ENCODE measurements at regions of chr11 and their contacts with region 1.

Region 1: DNA sequence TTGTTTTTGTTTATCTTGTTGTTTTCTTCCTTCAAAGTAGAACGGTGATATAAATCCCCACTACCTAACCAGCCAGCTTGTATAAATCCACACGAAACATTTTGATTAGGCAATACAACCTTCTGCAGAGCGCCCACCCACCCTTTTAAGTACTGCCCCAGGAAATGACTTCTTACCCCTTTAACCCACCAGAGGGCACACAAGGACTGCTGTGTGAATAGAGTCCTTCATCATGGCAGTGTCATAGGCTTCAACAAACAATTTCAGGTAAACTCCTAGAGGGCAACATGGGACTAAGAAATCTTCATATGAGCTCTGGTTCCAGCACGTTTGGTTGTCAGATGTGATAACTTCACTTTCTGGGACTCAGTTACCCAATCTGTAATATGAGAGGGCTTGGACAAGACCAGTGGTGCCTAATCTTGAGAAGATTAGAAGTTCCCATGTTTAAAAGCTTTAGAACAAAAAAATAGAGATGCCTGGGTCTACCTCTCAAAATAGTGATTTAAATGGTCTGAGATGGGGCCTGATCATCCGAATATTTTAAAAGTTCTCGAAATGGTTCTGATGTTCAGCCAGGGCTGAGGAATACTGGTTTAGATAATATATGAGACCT is 56.1 kb downstream of the PIWIL4 start:
- DNase-seq: peak in 8 of 9 donors; percentile 33 to 68 (median 55)
- ATAC-seq: peak; percentile 91
- H3K4me3 ChIP-seq: no peak overlapping the region
- H3K4me3 Mint-ChIP-seq: no peak overlapping the region
- H3K27ac ChIP-seq: no peak overlapping the region
- H3K27ac Mint-ChIP-seq: peak overlapping the region in 1 of 9 donors; percentile 2
- H3K4me1 ChIP-seq: no peaks in the 10 kb centered on the region
- H3K4me1 Mint-ChIP-seq: peaks cover 0 to 2% (median 0%) of the 10 kb centered on the region in 7 donors
- H3K27me3 ChIP-seq: no peaks in the 10 kb centered on the region
- H3K27me3 Mint-ChIP-seq: peaks cover 5 to 18% (median 13%) of the 10 kb centered on the region in 5 donors

Region 2: GRCh38 chr11:94636388-94636949 is 13.2 kb after region 1 on chr11:
- CTCF ChIA-PET with region 1: interaction called, 3 read pairs
- POLR2A ChIA-PET with region 1: no interaction called
- intact Hi-C with region 1: loop called in 1 of 2 experiments (anchors 2 kb)
- DNase-seq: no peak
- ATAC-seq: no peak
- H3K4me3 ChIP-seq: no peak overlapping the region
- H3K4me3 Mint-ChIP-seq: no peak overlapping the region
- H3K27ac ChIP-seq: no peak overlapping the region
- H3K27ac Mint-ChIP-seq: no peak overlapping the region
- H3K4me1 ChIP-seq: no peaks in the 10 kb centered on the region
- H3K4me1 Mint-ChIP-seq: peaks cover 0 to 20% (median 14%) of the 10 kb centered on the region in 7 donors
- H3K27me3 ChIP-seq: no peaks in the 10 kb centered on the region
- H3K27me3 Mint-ChIP-seq: no peaks in the 10 kb centered on the region

Region 3: DNA sequence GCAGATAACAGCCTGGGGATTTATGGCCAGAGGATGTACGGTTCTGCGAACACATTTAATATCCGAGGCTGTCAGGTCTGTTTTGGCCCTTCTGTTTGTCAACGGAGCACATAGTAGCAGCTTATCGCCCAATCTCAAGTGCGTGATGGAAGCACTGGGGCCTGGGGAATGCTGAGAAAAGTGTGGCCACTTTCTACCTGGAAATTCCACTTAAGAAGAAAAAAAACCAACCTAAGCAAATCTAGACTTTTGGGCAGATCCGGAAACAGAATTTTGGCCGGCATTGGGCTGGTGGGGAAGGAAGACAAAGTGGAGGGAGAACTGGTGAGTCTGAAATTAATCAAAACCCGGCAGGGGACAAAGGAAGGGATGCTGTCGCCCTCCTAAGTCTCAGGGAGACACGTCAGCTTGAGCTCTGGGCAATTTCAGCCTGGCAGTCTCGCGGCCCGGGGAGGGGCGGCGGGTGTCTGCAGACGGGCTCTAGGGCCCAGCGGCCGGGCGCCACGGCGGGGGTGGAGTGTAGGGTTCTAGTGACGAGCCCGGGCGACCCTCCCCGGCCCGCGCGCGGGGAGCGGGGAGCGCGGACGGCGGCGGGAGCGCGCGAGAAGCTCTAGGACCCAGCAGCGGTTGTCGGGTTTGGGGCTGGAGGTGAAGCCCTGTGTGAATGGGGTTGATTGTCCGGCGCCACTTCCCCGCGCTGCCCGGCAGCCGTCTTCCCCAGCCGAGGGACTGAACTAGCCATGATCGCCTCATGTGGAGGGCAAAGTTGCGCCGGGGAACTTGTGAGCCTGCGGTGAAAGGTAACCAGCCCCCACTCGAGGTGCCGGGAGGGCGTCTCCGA is 144.8 kb after region 1 on chr11 and contains the start of gene AMOTL1:
- CTCF ChIA-PET with region 1: no interaction called
- POLR2A ChIA-PET with region 1: no interaction called
- intact Hi-C with region 1: loop called (anchors 5 kb)
- DNase-seq: peak in 2 of 9 donors; percentile 15 to 56
- ATAC-seq: peak; percentile 71
- H3K4me3 ChIP-seq: no peak within 1 kb of the TSS
- H3K4me3 Mint-ChIP-seq: peak within 1 kb of the TSS; percentile 45 to 87 (median 80)
- H3K27ac ChIP-seq: no peak within 1 kb of the TSS
- H3K27ac Mint-ChIP-seq: peak within 1 kb of the TSS in 2 of 9 donors; percentile 58 to 66
- H3K4me1 ChIP-seq: no peaks in the 10 kb centered on the region
- H3K4me1 Mint-ChIP-seq: peaks cover 5 to 19% (median 13%) of the 10 kb centered on the region in 7 donors
- H3K27me3 ChIP-seq: no peaks in the 10 kb centered on the region
- H3K27me3 Mint-ChIP-seq: peaks cover 36 to 48% (median 41%) of the 10 kb centered on the region in 5 donors
- total RNA-seq, gene AMOTL1: 0.05 to 6.3 (median 0.39) TPM in 4 of 5 experiments, not detected in the other

Region 4: GRCh38 chr11:94897330-94897768 is 274.1 kb after region 1 on chr11:
- CTCF ChIA-PET with region 1: interaction called, 4 read pairs
- POLR2A ChIA-PET with region 1: no interaction called
- intact Hi-C with region 1: loop called in 1 of 2 experiments (anchors 1 kb)
- DNase-seq: peak in 5 of 9 donors; percentile 14 to 34 (median 26)
- ATAC-seq: peak; percentile 63
- H3K4me3 ChIP-seq: no peak overlapping the region
- H3K4me3 Mint-ChIP-seq: no peak overlapping the region
- H3K27ac ChIP-seq: no peak overlapping the region
- H3K27ac Mint-ChIP-seq: no peak overlapping the region
- H3K4me1 ChIP-seq: no peaks in the 10 kb centered on the region
- H3K4me1 Mint-ChIP-seq: peaks cover 0 to 5% (median 0%) of the 10 kb centered on the region in 7 donors
- H3K27me3 ChIP-seq: no peaks in the 10 kb centered on the region
- H3K27me3 Mint-ChIP-seq: peaks cover 0 to 7% (median 0%) of the 10 kb centered on the region in 5 donors

Region 5: DNA sequence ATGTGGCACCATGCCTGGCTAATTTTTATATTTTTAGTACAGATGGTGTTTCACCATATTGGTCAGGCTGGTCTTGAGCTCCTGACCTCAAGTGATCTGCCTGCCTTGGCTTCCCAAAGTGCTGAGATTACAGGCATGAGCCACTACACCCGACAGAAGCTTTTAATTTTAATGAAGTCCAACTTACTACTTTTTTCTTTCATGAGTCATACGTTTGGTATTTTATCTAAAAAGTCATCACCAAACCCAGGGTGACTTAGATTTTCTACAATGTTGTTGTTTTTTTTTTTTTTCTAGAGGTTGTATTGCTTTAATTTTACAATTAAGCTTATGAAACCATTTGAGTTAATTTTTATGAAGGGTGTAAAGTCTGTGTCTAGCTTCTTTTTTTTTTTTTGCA is 1801.5 kb after region 1 on chr11:
- CTCF ChIA-PET with region 1: interaction called, 3 read pairs
- POLR2A ChIA-PET with region 1: no interaction called
- intact Hi-C with region 1: loop called (anchors 1 to 2 kb)
- DNase-seq: no peak
- ATAC-seq: no peak
- H3K4me3 ChIP-seq: no peak overlapping the region
- H3K4me3 Mint-ChIP-seq: no peak overlapping the region
- H3K27ac ChIP-seq: no peak overlapping the region
- H3K27ac Mint-ChIP-seq: no peak overlapping the region
- H3K4me1 ChIP-seq: no peaks in the 10 kb centered on the region
- H3K4me1 Mint-ChIP-seq: peaks cover 0 to 6% (median 0%) of the 10 kb centered on the region in 7 donors
- H3K27me3 ChIP-seq: peaks cover 0 to 3% of the 10 kb centered on the region in 2 donors
- H3K27me3 Mint-ChIP-seq: peaks cover 27 to 49% (median 44%) of the 10 kb centered on the region in 5 donors

Measured in naive thymus-derived CD4-positive, alpha-beta T cell (primary cell).